Gastrocnemius medialis (tissue), 4 donors: ENCODE measurements at regions of chr3 and their contacts with region 1.

Region 1: GRCh38 chr3:38479431-38480092 is 16.6 kb upstream of the EXOG start:
- DNase-seq: peak; percentile 56 to 70
- ATAC-seq: peak; percentile 82 to 94
- H3K4me3 ChIP-seq: no peak overlapping the region
- H3K27ac ChIP-seq: peak overlapping the region in 2 of 4 donors; percentile 9 to 14
- H3K4me1 ChIP-seq: peaks cover 0 to 12% of the 10 kb centered on the region in 2 donors
- H3K27me3 ChIP-seq: no peaks in the 10 kb centered on the region
- CTCF ChIP-seq: peak; percentile 70 to 94 (median 82)
- POLR2A ChIP-seq: no peak

Region 2: GRCh38 chr3:38346587-38347410 is 132.8 kb before region 1 on chr3 and contains the start of gene XYLB:
- in situ Hi-C with region 1: loop called (anchors 5 kb)
- intact Hi-C with region 1: loop called (anchors 2 kb)
- DNase-seq: peak; percentile 73 to 76
- ATAC-seq: peak; percentile 95 to 97
- H3K4me3 ChIP-seq: peak within 1 kb of the TSS; percentile 60 to 81 (median 64)
- H3K27ac ChIP-seq: peak within 1 kb of the TSS in 3 of 4 donors; percentile 29 to 74 (median 30)
- H3K4me1 ChIP-seq: no peaks in the 10 kb centered on the region
- H3K27me3 ChIP-seq: no peaks in the 10 kb centered on the region
- CTCF ChIP-seq: peak; percentile 75 to 88 (median 87)
- POLR2A ChIP-seq: no peak
- total RNA-seq, gene XYLB: 0.23 to 1.1 (median 0.44) TPM

Region 3: GRCh38 chr3:38397320-38397719 is 82.2 kb before region 1 on chr3:
- in situ Hi-C with region 1: no loop called
- intact Hi-C with region 1: loop called (anchors 10 kb)
- DNase-seq: no peak
- ATAC-seq: no peak
- H3K4me3 ChIP-seq: no peak overlapping the region
- H3K27ac ChIP-seq: no peak overlapping the region
- H3K4me1 ChIP-seq: no peaks in the 10 kb centered on the region
- H3K27me3 ChIP-seq: no peaks in the 10 kb centered on the region
- CTCF ChIP-seq: no peak
- POLR2A ChIP-seq: no peak

Region 4: GRCh38 chr3:38453075-38453912 is 26.3 kb before region 1 on chr3 and contains the start of gene ACVR2B:
- in situ Hi-C with region 1: no loop called
- intact Hi-C with region 1: loop called (anchors 2 kb)
- DNase-seq: peak; percentile 85 to 86
- ATAC-seq: peak; percentile 43
- H3K4me3 ChIP-seq: peak within 1 kb of the TSS; percentile 73 to 92 (median 79)
- H3K27ac ChIP-seq: peak within 1 kb of the TSS; percentile 96 to 98 (median 97)
- H3K4me1 ChIP-seq: peaks cover 23 to 29% of the 10 kb centered on the region in 2 donors
- H3K27me3 ChIP-seq: no peaks in the 10 kb centered on the region
- CTCF ChIP-seq: peak in 1 of 5 experiments; percentile 14
- POLR2A ChIP-seq: peak in 1 of 2 donors; percentile 69
- total RNA-seq, gene ACVR2B: 2.4 to 12.1 (median 6.3) TPM

Region 5: GRCh38 chr3:38519651-38520050 is 40.1 kb after region 1 on chr3:
- in situ Hi-C with region 1: no loop called
- intact Hi-C with region 1: no loop called
- DNase-seq: no peak
- ATAC-seq: no peak
- H3K4me3 ChIP-seq: no peak overlapping the region
- H3K27ac ChIP-seq: peak overlapping the region in 1 of 4 donors; percentile 27
- H3K4me1 ChIP-seq: peaks cover 14 to 22% of the 10 kb centered on the region in 2 donors
- H3K27me3 ChIP-seq: no peaks in the 10 kb centered on the region
- CTCF ChIP-seq: no peak
- POLR2A ChIP-seq: no peak